CD4-positive, alpha-beta T cell (primary cell): ENCODE measurements at regions of chr2 and their contacts with region 1.

Region 1: GRCh38 chr2:65056215-65057053 is at the start of gene CEP68:
- DNase-seq: peak; percentile 90 to 98 (median 94)
- ATAC-seq: peak; percentile 89
- H3K4me3 ChIP-seq: peak within 1 kb of the TSS; percentile 87
- H3K4me3 Mint-ChIP-seq: peak within 1 kb of the TSS; percentile 98
- H3K27ac ChIP-seq: peak within 1 kb of the TSS; percentile 45 to 66
- H3K27ac Mint-ChIP-seq: peak within 1 kb of the TSS; percentile 96
- H3K4me1 ChIP-seq: peaks cover 66% of the 10 kb centered on the region
- H3K4me1 Mint-ChIP-seq: peaks cover 69% of the 10 kb centered on the region
- H3K27me3 ChIP-seq: no peaks in the 10 kb centered on the region
- H3K27me3 Mint-ChIP-seq: no peaks in the 10 kb centered on the region
- CTCF ChIP-seq: no peak
- total RNA-seq, gene CEP68: 19.4 to 20.1 TPM

Region 2: GRCh38 chr2:63841254-63842022 is 1215.0 kb before region 1 on chr2 and contains the start of gene UGP2:
- CTCF ChIA-PET with region 1: no interaction called
- POLR2A ChIA-PET with region 1: interaction called, 7 read pairs
- intact Hi-C with region 1: loop called in 1 of 2 experiments (anchors 5 kb)
- DNase-seq: peak; percentile 70 to 92 (median 82)
- ATAC-seq: peak; percentile 64
- H3K4me3 ChIP-seq: peak within 1 kb of the TSS; percentile 99
- H3K4me3 Mint-ChIP-seq: peak within 1 kb of the TSS; percentile 99
- H3K27ac ChIP-seq: peak within 1 kb of the TSS; percentile 87
- H3K27ac Mint-ChIP-seq: peak within 1 kb of the TSS; percentile 97
- H3K4me1 ChIP-seq: peaks cover 29% of the 10 kb centered on the region
- H3K4me1 Mint-ChIP-seq: peaks cover 47% of the 10 kb centered on the region
- H3K27me3 ChIP-seq: no peaks in the 10 kb centered on the region
- H3K27me3 Mint-ChIP-seq: no peaks in the 10 kb centered on the region
- CTCF ChIP-seq: peak; percentile 15
- total RNA-seq, gene UGP2: 47.1 to 53.2 TPM

Region 3: GRCh38 chr2:64757126-64757525 is 299.3 kb before region 1 on chr2:
- CTCF ChIA-PET with region 1: no interaction called
- POLR2A ChIA-PET with region 1: interaction called, 15 read pairs
- intact Hi-C with region 1: loop called in 1 of 2 experiments (anchors 5 kb)
- DNase-seq: no peak
- ATAC-seq: no peak
- H3K4me3 ChIP-seq: no peak overlapping the region
- H3K4me3 Mint-ChIP-seq: no peak overlapping the region
- H3K27ac ChIP-seq: no peak overlapping the region
- H3K27ac Mint-ChIP-seq: no peak overlapping the region
- H3K4me1 ChIP-seq: peaks cover under 1% of the 10 kb centered on the region
- H3K4me1 Mint-ChIP-seq: peaks cover 6% of the 10 kb centered on the region
- H3K27me3 ChIP-seq: no peaks in the 10 kb centered on the region
- H3K27me3 Mint-ChIP-seq: no peaks in the 10 kb centered on the region
- CTCF ChIP-seq: no peak

Region 4: DNA sequence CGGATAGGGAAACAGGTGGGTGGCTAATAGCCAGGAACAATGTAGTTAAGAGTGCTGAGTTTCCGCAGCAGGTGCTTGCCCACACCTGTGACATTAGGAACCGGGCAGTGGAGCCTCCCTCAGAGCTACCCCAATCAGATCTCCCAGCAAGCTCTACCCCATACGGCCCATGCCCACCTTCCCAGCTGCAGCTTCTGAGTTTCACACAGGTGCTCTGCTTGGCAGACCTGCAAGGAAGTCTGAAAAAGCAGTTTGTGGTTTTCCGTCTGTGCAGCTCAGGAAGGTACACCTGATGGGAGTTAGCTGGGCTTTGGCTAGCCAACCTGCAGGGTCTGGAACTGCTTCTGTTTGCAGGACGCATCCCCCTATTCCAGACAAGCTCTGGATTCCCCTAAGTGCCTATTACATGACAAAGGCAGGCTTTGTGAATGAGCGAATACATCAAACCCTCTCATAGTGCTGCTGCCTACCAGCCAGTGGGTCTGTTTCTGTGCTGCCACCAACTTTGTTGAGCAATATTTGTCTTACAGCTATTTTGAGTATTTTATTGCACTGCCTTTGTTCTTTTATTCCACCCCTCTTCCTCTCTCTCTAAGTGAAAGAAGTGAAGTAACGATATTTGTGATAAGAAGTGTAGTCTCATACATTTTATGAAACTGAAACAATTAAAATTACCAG is 25.0 kb before region 1 on chr2:
- CTCF ChIA-PET with region 1: no interaction called
- POLR2A ChIA-PET with region 1: interaction called, 17 read pairs
- intact Hi-C with region 1: no loop called
- DNase-seq: peak in 6 of 14 experiments; percentile 5 to 45 (median 32)
- ATAC-seq: peak; percentile 68
- H3K4me3 ChIP-seq: no peak overlapping the region
- H3K4me3 Mint-ChIP-seq: peak overlapping the region; percentile 66
- H3K27ac ChIP-seq: peak overlapping the region; percentile 40 to 61
- H3K27ac Mint-ChIP-seq: peak overlapping the region; percentile 74
- H3K4me1 ChIP-seq: peaks cover 28% of the 10 kb centered on the region
- H3K4me1 Mint-ChIP-seq: peaks cover 26% of the 10 kb centered on the region
- H3K27me3 ChIP-seq: no peaks in the 10 kb centered on the region
- H3K27me3 Mint-ChIP-seq: no peaks in the 10 kb centered on the region
- CTCF ChIP-seq: no peak

Region 5: GRCh38 chr2:65070172-65070830 is 13.9 kb after region 1 on chr2:
- CTCF ChIA-PET with region 1: interaction called, 20 read pairs
- POLR2A ChIA-PET with region 1: interaction called, 39 read pairs
- intact Hi-C with region 1: no loop called
- DNase-seq: no peak
- ATAC-seq: no peak
- H3K4me3 ChIP-seq: no peak overlapping the region
- H3K4me3 Mint-ChIP-seq: no peak overlapping the region
- H3K27ac ChIP-seq: no peak overlapping the region
- H3K27ac Mint-ChIP-seq: peak overlapping the region; percentile 60
- H3K4me1 ChIP-seq: peaks cover 32% of the 10 kb centered on the region
- H3K4me1 Mint-ChIP-seq: peaks cover 24% of the 10 kb centered on the region
- H3K27me3 ChIP-seq: no peaks in the 10 kb centered on the region
- H3K27me3 Mint-ChIP-seq: no peaks in the 10 kb centered on the region
- CTCF ChIP-seq: no peak

Region 6: GRCh38 chr2:65177751-65178442 is 121.5 kb after region 1 on chr2:
- CTCF ChIA-PET with region 1: no interaction called
- POLR2A ChIA-PET with region 1: no interaction called
- intact Hi-C with region 1: no loop called
- DNase-seq: no peak
- ATAC-seq: no peak
- H3K4me3 ChIP-seq: no peak overlapping the region
- H3K4me3 Mint-ChIP-seq: no peak overlapping the region
- H3K27ac ChIP-seq: no peak overlapping the region
- H3K27ac Mint-ChIP-seq: no peak overlapping the region
- H3K4me1 ChIP-seq: no peaks in the 10 kb centered on the region
- H3K4me1 Mint-ChIP-seq: no peaks in the 10 kb centered on the region
- H3K27me3 ChIP-seq: no peaks in the 10 kb centered on the region
- H3K27me3 Mint-ChIP-seq: no peaks in the 10 kb centered on the region
- CTCF ChIP-seq: no peak

Region 7: DNA sequence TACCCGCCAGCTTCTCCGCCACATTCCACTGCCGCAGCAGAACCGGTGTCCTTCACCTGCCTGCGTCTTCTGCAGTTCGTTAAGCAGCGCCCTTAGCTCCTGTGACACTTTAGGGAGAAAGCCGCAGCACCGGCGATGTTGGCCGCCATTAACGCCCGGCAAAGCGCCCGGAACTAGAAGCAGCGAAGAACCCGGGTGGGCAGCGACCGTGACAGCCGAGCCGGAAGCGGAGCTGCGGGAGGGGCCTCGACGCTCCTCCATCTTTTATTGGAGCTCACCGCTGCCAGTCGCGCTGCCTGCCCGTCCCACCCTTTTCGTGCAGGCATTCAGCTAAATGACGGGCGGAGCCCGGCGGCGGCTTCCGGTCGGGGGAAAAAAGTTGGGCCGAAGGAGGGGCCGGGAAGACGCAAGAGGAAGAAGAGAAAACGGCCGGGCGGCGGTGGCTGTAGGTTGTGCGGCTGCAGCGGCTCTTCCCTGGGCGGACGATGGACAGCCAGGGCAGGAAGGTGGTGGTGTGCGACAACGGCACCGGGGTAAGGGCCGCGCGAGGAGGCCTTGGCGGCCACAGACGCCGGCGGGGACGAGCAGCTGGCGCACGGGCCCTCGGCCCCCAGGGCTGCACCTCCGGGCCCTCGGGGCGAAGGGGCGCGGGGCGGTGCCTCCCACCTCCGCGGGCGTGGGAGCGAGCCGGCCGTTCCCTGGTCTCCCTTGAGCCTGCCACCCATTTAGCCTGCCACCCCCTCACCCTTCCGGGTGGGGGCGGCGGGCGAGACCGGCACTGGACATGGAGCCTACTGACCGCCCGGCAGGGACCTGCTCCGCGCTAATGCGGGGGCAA is 171.2 kb after region 1 on chr2 and contains the start of gene ACTR2:
- CTCF ChIA-PET with region 1: no interaction called
- POLR2A ChIA-PET with region 1: interaction called, 37 read pairs
- intact Hi-C with region 1: loop called (anchors 5 kb)
- DNase-seq: peak; percentile 87 to 98 (median 92)
- ATAC-seq: peak; percentile 93
- H3K4me3 ChIP-seq: peak within 1 kb of the TSS; percentile 76
- H3K4me3 Mint-ChIP-seq: peak within 1 kb of the TSS; percentile 100
- H3K27ac ChIP-seq: peak within 1 kb of the TSS; percentile 97 to 98
- H3K27ac Mint-ChIP-seq: peak within 1 kb of the TSS; percentile 98
- H3K4me1 ChIP-seq: peaks cover 35% of the 10 kb centered on the region
- H3K4me1 Mint-ChIP-seq: peaks cover 53% of the 10 kb centered on the region
- H3K27me3 ChIP-seq: no peaks in the 10 kb centered on the region
- H3K27me3 Mint-ChIP-seq: no peaks in the 10 kb centered on the region
- CTCF ChIP-seq: no peak
- total RNA-seq, gene ACTR2: 128 to 130 TPM